Ascending aorta (tissue), 2 donors: ENCODE measurements at regions of chr22 and their contacts with region 1.

Region 1: GRCh38 chr22:20156611-20157429 is 6.0 kb upstream of the CCDC188 start:
- DNase-seq: peak; percentile 37 to 87
- H3K4me3 ChIP-seq: no peak overlapping the region
- H3K27ac ChIP-seq: no peak overlapping the region
- H3K4me1 ChIP-seq: no peaks in the 10 kb centered on the region
- H3K27me3 ChIP-seq: peaks cover 4% of the 10 kb centered on the region
- CTCF ChIP-seq: peak; percentile 98 to 100 (median 99)

Region 2: GRCh38 chr22:20284471-20285086 is 127.8 kb after region 1 on chr22:
- intact Hi-C with region 1: loop called (anchors 1 kb)
- DNase-seq: no peak
- H3K4me3 ChIP-seq: no peak overlapping the region
- H3K27ac ChIP-seq: no peak overlapping the region
- H3K4me1 ChIP-seq: no peaks in the 10 kb centered on the region
- H3K27me3 ChIP-seq: no peaks in the 10 kb centered on the region
- CTCF ChIP-seq: no peak